ENCODE measurements at regions of chr6 and their contacts with region 1.

Region 1: GRCh38 chr6:11232193-11232769 is at the start of gene NEDD9:
- DNase-seq: peak; percentile 98
- H3K4me3 Mint-ChIP-seq: peak within 1 kb of the TSS; percentile 81
- H3K27ac Mint-ChIP-seq: peak within 1 kb of the TSS; percentile 96
- H3K4me1 Mint-ChIP-seq: peaks cover 65% of the 10 kb centered on the region
- H3K27me3 Mint-ChIP-seq: no peaks in the 10 kb centered on the region
- total RNA-seq, gene NEDD9: 26.6 to 31.5 TPM

Region 2: GRCh38 chr6:11198663-11199603 is 33.3 kb before region 1 on chr6:
- CTCF ChIA-PET with region 1: no interaction called
- POLR2A ChIA-PET with region 1: interaction called, 4 read pairs
- intact Hi-C with region 1: loop called (anchors 1 kb)
- DNase-seq: peak; percentile 37
- H3K4me3 Mint-ChIP-seq: no peak overlapping the region
- H3K27ac Mint-ChIP-seq: peak overlapping the region; percentile 73
- H3K4me1 Mint-ChIP-seq: peaks cover 54% of the 10 kb centered on the region
- H3K27me3 Mint-ChIP-seq: no peaks in the 10 kb centered on the region

Region 3: GRCh38 chr6:11258260-11259237 is 26.3 kb after region 1 on chr6:
- CTCF ChIA-PET with region 1: no interaction called
- POLR2A ChIA-PET with region 1: interaction called, 5 read pairs
- intact Hi-C with region 1: loop called (anchors 1 kb)
- DNase-seq: peak; percentile 48
- H3K4me3 Mint-ChIP-seq: peak overlapping the region; percentile 21
- H3K27ac Mint-ChIP-seq: peak overlapping the region; percentile 62
- H3K4me1 Mint-ChIP-seq: peaks cover 61% of the 10 kb centered on the region
- H3K27me3 Mint-ChIP-seq: no peaks in the 10 kb centered on the region

Region 4: DNA sequence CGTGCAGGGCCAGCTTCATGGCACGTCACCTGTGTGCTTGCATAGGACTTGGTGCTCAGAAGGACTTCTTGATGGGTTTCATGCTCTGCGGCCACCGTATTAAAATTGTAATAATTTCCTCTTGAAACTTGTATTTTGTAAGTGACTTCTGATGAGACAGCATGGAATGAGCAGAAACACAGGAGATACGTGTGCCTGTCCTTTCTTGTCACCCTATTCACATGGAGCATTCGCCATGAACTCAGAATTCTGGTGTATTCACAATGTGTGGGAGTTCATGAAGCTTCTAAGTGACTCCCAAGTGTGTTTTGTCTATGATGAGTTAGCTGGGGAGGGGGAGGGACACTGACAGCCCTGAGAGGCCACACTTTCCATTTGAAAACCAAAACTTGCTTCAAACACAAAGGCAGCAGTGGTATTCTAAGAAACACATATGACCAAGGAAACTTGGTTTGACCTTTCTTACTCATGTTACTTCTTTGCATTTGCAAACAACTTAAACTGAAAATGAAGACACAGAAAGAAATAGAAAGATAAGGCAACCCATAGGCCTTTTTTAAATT is 92.3 kb after region 1 on chr6:
- CTCF ChIA-PET with region 1: interaction called, 3 read pairs
- POLR2A ChIA-PET with region 1: interaction called, 8 read pairs
- intact Hi-C with region 1: loop called (anchors 1 kb)
- DNase-seq: peak; percentile 83
- H3K4me3 Mint-ChIP-seq: peak overlapping the region; percentile 57
- H3K27ac Mint-ChIP-seq: peak overlapping the region; percentile 85
- H3K4me1 Mint-ChIP-seq: peaks cover 73% of the 10 kb centered on the region
- H3K27me3 Mint-ChIP-seq: no peaks in the 10 kb centered on the region

Region 5: GRCh38 chr6:11460001-11460668 is 227.9 kb after region 1 on chr6:
- CTCF ChIA-PET with region 1: interaction called, 3 read pairs
- POLR2A ChIA-PET with region 1: interaction called, 6 read pairs
- intact Hi-C with region 1: loop called (anchors 2 kb)
- DNase-seq: peak; percentile 23
- H3K4me3 Mint-ChIP-seq: peak overlapping the region; percentile 57
- H3K27ac Mint-ChIP-seq: peak overlapping the region; percentile 90
- H3K4me1 Mint-ChIP-seq: peaks cover 31% of the 10 kb centered on the region
- H3K27me3 Mint-ChIP-seq: no peaks in the 10 kb centered on the region